ENCODE measurements at regions of chr2 and their contacts with region 1.

Region 1: GRCh38 chr2:37615804-37616676 is 55.4 kb downstream of the CDC42EP3 start:
- DNase-seq: peak; percentile 73 to 81 (median 77)
- H3K4me3 ChIP-seq: no peak overlapping the region
- H3K4me3 Mint-ChIP-seq: peak overlapping the region in 7 of 8 donors; percentile 26 to 76 (median 74)
- H3K27ac ChIP-seq: peak overlapping the region; percentile 37
- H3K27ac Mint-ChIP-seq: peak overlapping the region; percentile 90 to 97 (median 96)
- H3K4me1 ChIP-seq: peaks cover 72% of the 10 kb centered on the region
- H3K4me1 Mint-ChIP-seq: peaks cover 53 to 80% (median 70%) of the 10 kb centered on the region in 4 donors
- H3K27me3 ChIP-seq: no peaks in the 10 kb centered on the region
- H3K27me3 Mint-ChIP-seq: no peaks in the 10 kb centered on the region

Region 2: GRCh38 chr2:37537316-37537715 is 78.7 kb before region 1 on chr2:
- CTCF ChIA-PET with region 1: no interaction called
- POLR2A ChIA-PET with region 1: no interaction called
- intact Hi-C with region 1: loop called (anchors 5 kb)
- DNase-seq: no peak
- H3K4me3 ChIP-seq: no peak overlapping the region
- H3K4me3 Mint-ChIP-seq: no peak overlapping the region
- H3K27ac ChIP-seq: no peak overlapping the region
- H3K27ac Mint-ChIP-seq: no peak overlapping the region
- H3K4me1 ChIP-seq: no peaks in the 10 kb centered on the region
- H3K4me1 Mint-ChIP-seq: peaks cover 0 to 5% (median under 1%) of the 10 kb centered on the region in 4 donors
- H3K27me3 ChIP-seq: no peaks in the 10 kb centered on the region
- H3K27me3 Mint-ChIP-seq: peaks cover 0 to 1% of the 10 kb centered on the region in 2 donors

Region 3: DNA sequence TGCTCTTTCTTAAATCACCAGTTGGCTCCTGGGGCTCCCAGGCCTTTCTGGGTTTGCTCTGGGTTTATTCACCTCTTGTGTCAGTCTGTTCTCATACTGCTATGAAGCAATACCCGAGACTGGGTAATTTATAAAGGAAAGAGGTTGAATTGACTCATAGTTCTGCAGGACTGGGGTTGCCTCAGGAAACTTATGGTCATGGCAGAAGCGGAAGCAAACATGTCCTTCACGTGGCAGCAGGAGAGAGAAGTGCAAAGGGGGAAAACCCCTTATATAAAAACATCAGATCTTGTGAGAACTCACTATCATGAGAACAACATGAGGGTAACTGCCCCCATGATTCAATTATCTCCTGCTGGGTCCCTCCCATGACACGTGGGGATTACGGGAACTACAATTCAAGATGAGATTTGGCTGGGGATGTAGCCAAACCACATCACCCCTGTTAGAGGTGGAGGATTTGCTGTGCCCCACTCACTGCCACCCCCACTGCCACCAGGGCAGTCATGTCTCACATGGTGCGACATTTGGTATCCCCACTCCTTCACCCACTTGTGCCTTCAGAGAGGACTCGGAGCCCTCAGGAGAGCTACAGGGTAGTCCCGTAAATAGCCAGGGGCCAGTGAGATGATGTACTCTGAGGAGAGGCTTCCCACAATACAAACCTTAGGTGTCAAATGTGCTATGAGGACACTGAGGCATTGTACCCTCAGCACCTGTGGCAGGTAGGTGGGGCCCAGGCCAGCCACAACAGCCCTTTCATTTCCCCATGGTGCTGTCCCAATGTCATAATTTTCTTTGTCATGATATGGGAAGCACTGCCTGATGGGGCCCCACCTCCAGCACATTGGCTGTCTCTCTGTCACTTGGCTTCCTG is 19.7 kb after region 1 on chr2:
- CTCF ChIA-PET with region 1: interaction called, 4 read pairs
- POLR2A ChIA-PET with region 1: interaction called, 11 read pairs
- intact Hi-C with region 1: loop called (anchors 2 kb)
- DNase-seq: peak; percentile 70 to 94 (median 78)
- H3K4me3 ChIP-seq: peak overlapping the region in 1 of 2 donors; percentile 22
- H3K4me3 Mint-ChIP-seq: peak overlapping the region in 7 of 8 donors; percentile 54 to 80 (median 66)
- H3K27ac ChIP-seq: peak overlapping the region; percentile 72
- H3K27ac Mint-ChIP-seq: peak overlapping the region; percentile 92 to 98 (median 94)
- H3K4me1 ChIP-seq: peaks cover 76% of the 10 kb centered on the region
- H3K4me1 Mint-ChIP-seq: peaks cover 68 to 90% (median 75%) of the 10 kb centered on the region in 4 donors
- H3K27me3 ChIP-seq: no peaks in the 10 kb centered on the region
- H3K27me3 Mint-ChIP-seq: no peaks in the 10 kb centered on the region

Region 4: GRCh38 chr2:38925982-38926381 is 1309.9 kb after region 1 on chr2:
- CTCF ChIA-PET with region 1: no interaction called
- POLR2A ChIA-PET with region 1: no interaction called
- intact Hi-C with region 1: no loop called
- DNase-seq: no peak
- H3K4me3 ChIP-seq: no peak overlapping the region
- H3K4me3 Mint-ChIP-seq: no peak overlapping the region
- H3K27ac ChIP-seq: no peak overlapping the region
- H3K27ac Mint-ChIP-seq: no peak overlapping the region
- H3K4me1 ChIP-seq: no peaks in the 10 kb centered on the region
- H3K4me1 Mint-ChIP-seq: no peaks in the 10 kb centered on the region
- H3K27me3 ChIP-seq: no peaks in the 10 kb centered on the region
- H3K27me3 Mint-ChIP-seq: peaks cover 1 to 5% of the 10 kb centered on the region in 2 donors

Measured in CD4-positive, alpha-beta memory T cell (primary cell).